Activated CD4-positive, alpha-beta T cell treated with anti-CD3 and anti-CD28 coated beads, Interleukin-2, amount 10 ng/mL, durations not matched to agents 7 days and 5 days (primary cell): ENCODE measurements at regions of chr18 and their contacts with region 1.

Region 1: DNA sequence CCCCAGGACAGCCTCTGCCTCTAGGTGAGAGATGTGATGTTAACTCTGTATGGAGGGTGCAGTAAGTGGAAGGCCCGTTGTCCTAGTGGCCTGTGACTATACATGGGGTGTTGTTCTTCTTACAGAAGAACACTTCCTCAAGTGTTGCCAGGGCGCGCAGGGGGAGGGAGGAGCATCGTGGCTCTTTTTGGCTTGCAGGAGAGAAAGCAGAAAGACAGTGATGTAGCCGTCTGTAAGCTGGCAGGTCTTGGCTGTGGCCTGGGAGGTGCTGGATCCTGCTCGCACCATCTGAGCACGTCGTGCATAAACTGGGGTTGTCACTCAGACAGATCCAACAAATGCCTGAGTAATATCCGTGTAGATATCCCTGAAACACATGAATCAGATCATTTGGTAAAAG is 44.3 kb downstream of the ZNF236 start:
- DNase-seq: no peak
- H3K4me3 Mint-ChIP-seq: no peak overlapping the region
- H3K27ac Mint-ChIP-seq: no peak overlapping the region
- H3K4me1 Mint-ChIP-seq: peaks cover 3% of the 10 kb centered on the region
- H3K27me3 Mint-ChIP-seq: no peaks in the 10 kb centered on the region

Region 2: DNA sequence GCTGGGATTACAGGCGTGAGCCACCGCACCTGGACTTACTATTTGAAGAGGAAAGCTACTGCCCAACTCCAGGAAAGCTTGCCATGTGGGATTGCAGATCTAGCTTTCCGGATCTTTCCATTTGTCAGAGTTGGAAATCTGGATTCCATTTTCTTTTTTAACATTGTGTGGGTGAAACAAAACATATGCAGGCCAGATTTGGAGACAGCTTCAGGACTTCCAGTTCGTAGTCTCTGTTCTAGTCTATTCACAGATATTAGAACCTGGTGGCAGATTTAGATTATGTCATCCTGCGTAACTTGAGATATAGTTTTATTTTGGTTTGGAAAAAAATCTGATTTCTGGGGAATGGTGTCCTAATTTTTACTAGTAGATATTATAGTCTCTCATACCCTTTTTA is 26.2 kb after region 1 on chr18:
- CTCF ChIA-PET with region 1: no interaction called
- POLR2A ChIA-PET with region 1: no interaction called
- DNase-seq: no peak
- H3K4me3 Mint-ChIP-seq: no peak overlapping the region
- H3K27ac Mint-ChIP-seq: no peak overlapping the region
- H3K4me1 Mint-ChIP-seq: no peaks in the 10 kb centered on the region
- H3K27me3 Mint-ChIP-seq: no peaks in the 10 kb centered on the region

Region 3: GRCh38 chr18:76908277-76908676 is 41.6 kb after region 1 on chr18:
- CTCF ChIA-PET with region 1: no interaction called
- POLR2A ChIA-PET with region 1: interaction called, 10 read pairs
- DNase-seq: no peak
- H3K4me3 Mint-ChIP-seq: no peak overlapping the region
- H3K27ac Mint-ChIP-seq: no peak overlapping the region
- H3K4me1 Mint-ChIP-seq: no peaks in the 10 kb centered on the region
- H3K27me3 Mint-ChIP-seq: no peaks in the 10 kb centered on the region